ENCODE measurements at regions of chr6 and their contacts with region 1.

Region 1: GRCh38 chr6:27753668-27754407 is 158.4 kb downstream of the OR2B2 start:
- DNase-seq: peak; percentile 53
- ATAC-seq: peak; percentile 59
- H3K4me3 Mint-ChIP-seq: peak overlapping the region; percentile 96
- H3K27ac Mint-ChIP-seq: peak overlapping the region; percentile 97
- H3K4me1 Mint-ChIP-seq: peaks cover 32% of the 10 kb centered on the region
- H3K27me3 Mint-ChIP-seq: no peaks in the 10 kb centered on the region
- CTCF ChIP-seq: no peak

Region 2: DNA sequence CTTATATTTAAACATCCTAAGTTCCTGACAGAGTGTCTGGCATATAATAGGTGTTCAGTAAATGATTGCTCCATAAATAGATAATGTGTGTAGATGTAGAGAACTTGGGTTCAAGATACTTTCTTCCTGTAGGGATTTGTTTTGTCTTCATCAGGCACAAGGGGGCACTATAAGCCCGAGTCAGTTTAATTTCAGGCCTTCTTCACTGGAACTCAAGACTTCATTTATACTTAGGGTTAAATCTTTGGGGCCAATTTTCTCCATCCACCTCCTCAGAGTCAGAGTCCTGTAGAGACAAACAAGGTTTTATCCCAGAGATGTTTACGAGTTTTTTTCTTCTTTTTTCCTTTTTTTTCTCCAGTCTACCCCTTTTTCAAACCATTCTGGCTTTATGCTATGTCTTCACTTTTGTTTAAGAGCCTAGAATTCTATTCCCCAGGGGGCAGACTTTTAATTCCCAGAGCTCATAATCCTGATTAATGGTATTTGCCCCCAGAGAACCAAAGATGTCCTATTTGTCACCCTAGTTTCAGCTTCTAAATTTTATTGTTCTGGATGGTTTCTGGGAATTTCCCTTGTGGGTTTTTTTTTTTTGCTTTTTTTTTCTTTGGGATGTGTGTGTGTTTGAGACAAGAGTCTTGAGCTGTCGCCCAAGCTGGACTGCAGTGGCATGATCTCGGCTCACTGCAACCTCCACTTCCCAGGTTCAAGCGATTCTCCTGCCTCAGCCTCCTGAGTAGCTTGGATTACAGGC is 1578.2 kb before region 1 on chr6:
- CTCF ChIA-PET with region 1: no interaction called
- POLR2A ChIA-PET with region 1: no interaction called
- intact Hi-C with region 1: loop called (anchors 2 kb)
- DNase-seq: no peak
- ATAC-seq: no peak
- H3K4me3 Mint-ChIP-seq: no peak overlapping the region
- H3K27ac Mint-ChIP-seq: peak overlapping the region; percentile 65
- H3K4me1 Mint-ChIP-seq: peaks cover 38% of the 10 kb centered on the region
- H3K27me3 Mint-ChIP-seq: no peaks in the 10 kb centered on the region
- CTCF ChIP-seq: no peak

Region 3: DNA sequence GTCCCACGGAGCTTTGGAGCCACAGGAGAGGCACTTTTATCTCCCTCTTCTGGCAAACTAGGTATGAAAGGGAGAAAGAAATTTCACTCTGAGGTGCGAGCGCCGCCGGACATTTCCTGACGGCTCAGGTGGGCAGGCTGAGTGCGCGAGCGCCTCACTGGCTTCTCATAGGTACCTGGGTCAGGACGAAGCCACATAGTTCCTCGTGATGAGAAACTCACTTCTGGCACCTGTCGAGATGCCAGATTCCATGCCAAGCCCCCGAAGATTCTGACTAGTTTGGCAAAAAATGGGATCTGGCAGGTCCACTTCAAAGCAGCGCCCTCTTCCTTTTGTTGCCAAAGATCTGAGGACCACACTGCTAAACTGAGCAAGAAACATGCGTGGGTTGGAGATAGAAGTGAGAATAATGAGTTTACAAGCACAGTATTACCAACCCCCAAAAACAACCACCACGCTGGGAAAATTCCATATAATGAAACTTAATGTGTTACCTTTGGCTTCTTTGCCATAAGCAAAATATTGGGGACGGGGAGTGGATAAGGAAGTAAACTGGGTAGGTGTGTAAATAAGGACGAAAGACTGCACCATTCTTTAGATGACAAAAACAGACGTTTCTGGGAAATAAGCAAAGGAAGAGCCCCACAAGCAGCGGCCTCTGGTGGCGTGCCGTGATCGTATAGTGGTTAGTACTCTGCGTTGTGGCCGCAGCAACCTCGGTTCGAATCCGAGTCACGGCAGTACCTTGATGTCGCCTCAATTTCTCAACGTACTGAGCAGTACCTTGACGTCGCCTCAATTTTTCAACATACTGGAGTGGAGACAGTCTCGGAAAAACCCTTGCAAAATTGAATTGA is 596.2 kb before region 1 on chr6:
- CTCF ChIA-PET with region 1: no interaction called
- POLR2A ChIA-PET with region 1: interaction called, 3 read pairs
- intact Hi-C with region 1: loop called (anchors 2 kb)
- DNase-seq: peak; percentile 60
- ATAC-seq: peak; percentile 80
- H3K4me3 Mint-ChIP-seq: peak overlapping the region; percentile 89
- H3K27ac Mint-ChIP-seq: peak overlapping the region; percentile 81
- H3K4me1 Mint-ChIP-seq: peaks cover 33% of the 10 kb centered on the region
- H3K27me3 Mint-ChIP-seq: no peaks in the 10 kb centered on the region
- CTCF ChIP-seq: no peak

Region 4: GRCh38 chr6:27479319-27480182 is 274.3 kb before region 1 on chr6:
- CTCF ChIA-PET with region 1: interaction called, 4 read pairs
- POLR2A ChIA-PET with region 1: interaction called, 5 read pairs
- intact Hi-C with region 1: loop called (anchors 1 kb)
- DNase-seq: peak; percentile 84
- ATAC-seq: peak; percentile 76
- H3K4me3 Mint-ChIP-seq: no peak overlapping the region
- H3K27ac Mint-ChIP-seq: no peak overlapping the region
- H3K4me1 Mint-ChIP-seq: peaks cover 9% of the 10 kb centered on the region
- H3K27me3 Mint-ChIP-seq: no peaks in the 10 kb centered on the region
- CTCF ChIP-seq: no peak

Region 5: DNA sequence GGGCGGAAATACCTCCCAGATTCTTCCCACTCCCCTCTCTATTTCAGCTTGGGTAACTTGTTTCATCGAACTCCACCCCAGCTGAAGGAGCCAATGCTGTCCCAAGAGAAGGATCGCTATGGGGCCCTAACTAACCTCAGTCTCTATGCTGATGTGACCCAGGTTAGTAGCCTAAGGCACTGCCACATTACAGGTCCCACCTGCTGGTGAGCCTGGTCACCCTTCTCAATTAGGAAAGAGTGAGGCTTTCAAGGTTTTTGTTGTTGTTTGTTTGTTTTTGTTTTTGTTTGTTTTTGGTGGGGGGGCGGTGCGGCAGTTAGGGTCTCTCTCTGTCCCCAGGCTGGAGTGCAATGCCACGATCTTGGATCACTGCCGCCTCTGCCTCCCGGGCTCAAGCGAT is 10.0 kb before region 1 on chr6:
- CTCF ChIA-PET with region 1: interaction called, 5 read pairs
- POLR2A ChIA-PET with region 1: interaction called, 10 read pairs
- intact Hi-C with region 1: no loop called
- DNase-seq: no peak
- ATAC-seq: no peak
- H3K4me3 Mint-ChIP-seq: no peak overlapping the region
- H3K27ac Mint-ChIP-seq: no peak overlapping the region
- H3K4me1 Mint-ChIP-seq: no peaks in the 10 kb centered on the region
- H3K27me3 Mint-ChIP-seq: peaks cover 24% of the 10 kb centered on the region
- CTCF ChIP-seq: no peak

Region 6: DNA sequence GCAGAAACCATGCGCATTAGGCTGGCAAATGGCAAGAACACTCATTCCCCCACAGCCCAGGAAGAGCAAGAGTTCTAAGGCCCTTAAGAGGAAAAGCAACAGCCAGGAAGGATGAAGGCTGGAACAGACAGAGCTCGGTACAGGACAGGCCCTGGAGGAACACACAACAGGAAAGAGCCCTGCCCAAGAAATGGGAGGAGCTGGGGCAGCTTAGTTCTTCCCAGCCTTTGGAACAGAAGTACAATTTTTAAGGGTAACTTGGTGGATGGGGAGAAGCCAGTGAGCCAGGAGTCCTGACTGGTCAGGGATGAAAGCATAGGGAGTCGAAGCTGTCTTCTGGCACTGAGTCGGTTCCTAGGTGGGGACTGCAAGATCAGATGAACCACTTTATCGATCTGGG is 126.0 kb after region 1 on chr6:
- CTCF ChIA-PET with region 1: no interaction called
- POLR2A ChIA-PET with region 1: no interaction called
- intact Hi-C with region 1: no loop called
- DNase-seq: no peak
- ATAC-seq: no peak
- H3K4me3 Mint-ChIP-seq: no peak overlapping the region
- H3K27ac Mint-ChIP-seq: no peak overlapping the region
- H3K4me1 Mint-ChIP-seq: no peaks in the 10 kb centered on the region
- H3K27me3 Mint-ChIP-seq: no peaks in the 10 kb centered on the region
- CTCF ChIP-seq: no peak

Region 7: GRCh38 chr6:28080631-28081485 is 327.0 kb after region 1 on chr6:
- CTCF ChIA-PET with region 1: no interaction called
- POLR2A ChIA-PET with region 1: no interaction called
- intact Hi-C with region 1: loop called (anchors 10 kb)
- DNase-seq: peak; percentile 89
- ATAC-seq: peak; percentile 68
- H3K4me3 Mint-ChIP-seq: peak overlapping the region; percentile 98
- H3K27ac Mint-ChIP-seq: peak overlapping the region; percentile 97
- H3K4me1 Mint-ChIP-seq: peaks cover 52% of the 10 kb centered on the region
- H3K27me3 Mint-ChIP-seq: no peaks in the 10 kb centered on the region
- CTCF ChIP-seq: no peak

Measured in activated B cell treated with CpG ODN at 0.5 μM for 24 hours (primary cell).